ENCODE measurements at regions of chr10 and their contacts with region 1.

Region 1: DNA sequence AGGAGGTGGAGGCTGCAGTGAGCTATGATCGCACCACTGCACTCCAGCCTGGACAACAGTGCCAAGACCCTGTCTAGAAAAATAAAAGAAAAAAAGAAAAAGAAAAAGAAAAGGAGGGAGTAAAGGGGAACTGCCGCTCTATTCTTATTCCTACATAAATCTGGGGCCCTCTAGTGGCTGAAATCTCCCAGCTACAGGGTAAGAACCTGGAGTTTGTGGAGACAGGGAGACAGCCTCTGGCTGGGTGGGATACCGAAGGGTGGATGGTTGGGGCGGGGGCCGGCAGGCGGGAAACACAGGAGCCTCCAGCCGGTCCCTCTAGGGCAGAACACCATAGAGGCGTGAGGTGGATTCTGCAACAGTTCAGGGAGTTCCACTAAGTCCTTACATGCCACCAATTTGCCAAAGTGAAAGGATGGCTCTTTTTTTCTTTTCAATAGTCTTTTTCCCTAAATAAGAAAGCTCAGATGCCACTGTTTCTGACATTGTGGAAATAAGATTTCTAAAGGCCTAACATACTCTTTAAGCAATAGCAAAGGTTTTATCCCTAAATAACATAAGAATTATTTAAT is 117.3 kb downstream of the SVIL start:
- DNase-seq: peak; percentile 43
- ATAC-seq: peak; percentile 92
- H3K4me3 ChIP-seq: no peak overlapping the region
- H3K27ac ChIP-seq: no peak overlapping the region
- H3K4me1 ChIP-seq: peaks cover 9% of the 10 kb centered on the region
- H3K27me3 ChIP-seq: no peaks in the 10 kb centered on the region
- CTCF ChIP-seq: peak; percentile 57
- EP300 ChIP-seq: no peak
- POLR2A ChIP-seq: no peak
- RAD21 ChIP-seq: no peak

Region 2: DNA sequence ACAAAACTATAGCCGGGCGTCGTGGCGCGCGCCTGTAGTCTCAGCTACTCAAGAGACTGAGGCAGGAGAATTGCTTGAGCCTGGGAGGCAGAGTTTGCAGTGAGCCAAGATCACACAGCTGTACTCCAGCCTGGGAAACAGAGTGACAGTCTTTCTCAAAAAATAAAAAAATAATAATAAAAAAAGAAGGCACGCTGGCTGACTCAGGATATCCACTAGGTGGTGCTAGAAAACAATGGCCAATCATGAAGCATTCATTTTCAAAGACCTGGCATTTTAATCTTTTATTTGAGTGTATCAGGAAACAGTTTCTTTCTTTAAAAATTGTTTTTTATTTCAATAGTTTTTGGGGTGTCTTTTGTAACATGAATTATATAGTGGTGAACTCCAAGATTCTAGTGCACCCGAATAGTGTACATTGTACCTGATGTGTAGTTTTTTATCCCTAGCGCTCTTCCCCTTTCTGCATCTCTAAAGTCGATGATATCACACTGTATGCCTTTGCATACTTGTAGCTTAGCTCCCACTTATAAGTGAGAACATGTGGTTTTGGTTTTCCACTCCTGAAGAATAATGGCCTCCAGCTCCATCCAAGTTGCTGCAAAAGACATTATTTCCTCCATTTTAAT is 140.0 kb before region 1 on chr10:
- CTCF ChIA-PET with region 1: no interaction called
- POLR2A ChIA-PET with region 1: no interaction called
- in situ Hi-C with region 1: no loop called
- intact Hi-C with region 1: no loop called
- DNase-seq: no peak
- ATAC-seq: no peak
- H3K4me3 ChIP-seq: no peak overlapping the region
- H3K27ac ChIP-seq: no peak overlapping the region
- H3K4me1 ChIP-seq: peaks cover 36% of the 10 kb centered on the region
- H3K27me3 ChIP-seq: peaks cover 0 to 6% of the 10 kb centered on the region in 2 experiments; a peak in 2 of 5 replicates
- CTCF ChIP-seq: peak; percentile 40; the same call in 1 of the 2 replicates
- EP300 ChIP-seq: no peak
- POLR2A ChIP-seq: no peak
- RAD21 ChIP-seq: no peak

Region 3: GRCh38 chr10:29590915-29591650 is 73.6 kb after region 1 on chr10:
- CTCF ChIA-PET with region 1: interaction called, 3 read pairs
- POLR2A ChIA-PET with region 1: no interaction called
- in situ Hi-C with region 1: no loop called
- intact Hi-C with region 1: loop called (anchors 5 kb)
- DNase-seq: no peak
- ATAC-seq: no peak
- H3K4me3 ChIP-seq: no peak overlapping the region
- H3K27ac ChIP-seq: no peak overlapping the region
- H3K4me1 ChIP-seq: peaks cover 43% of the 10 kb centered on the region
- H3K27me3 ChIP-seq: no peaks in the 10 kb centered on the region
- CTCF ChIP-seq: no peak
- EP300 ChIP-seq: no peak
- POLR2A ChIP-seq: no peak
- RAD21 ChIP-seq: no peak

Measured in HepG2 (cell line).